Activated naive CD4-positive, alpha-beta T cell treated with anti-CD3 and anti-CD28 coated beads for 36 hours (primary cell): ENCODE measurements at regions of chr3 and their contacts with region 1.

Region 1: DNA sequence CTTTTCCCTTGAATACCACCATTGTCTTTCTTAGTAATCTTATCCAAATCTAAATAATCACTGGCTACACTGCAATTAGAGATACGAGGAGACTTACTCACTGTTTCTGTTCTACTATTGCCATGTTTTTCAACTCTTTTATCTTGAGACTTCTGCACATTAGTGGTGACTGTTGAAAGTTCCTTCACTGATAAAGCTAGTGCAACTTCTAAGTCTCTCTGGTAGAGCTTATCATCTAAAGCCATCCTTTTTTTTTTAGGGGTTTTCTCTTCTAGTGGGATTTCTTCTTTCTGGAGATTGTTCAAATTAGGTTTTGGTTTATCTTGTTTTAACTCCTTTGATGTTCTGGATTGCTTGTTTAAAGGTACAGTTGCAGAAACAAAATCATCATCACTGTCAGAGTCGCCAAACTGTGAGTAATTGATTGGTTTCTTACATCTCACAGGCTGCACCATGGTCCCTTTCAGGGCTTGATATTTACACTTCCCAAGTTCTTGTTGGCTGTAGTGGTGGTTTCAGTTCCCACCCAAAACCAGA is 37.7 kb downstream of the NCK1 start:
- DNase-seq: peak; percentile 19
- H3K4me3 Mint-ChIP-seq: peak overlapping the region; percentile 26
- H3K27ac Mint-ChIP-seq: peak overlapping the region; percentile 67
- H3K4me1 Mint-ChIP-seq: peaks cover 50% of the 10 kb centered on the region
- H3K27me3 Mint-ChIP-seq: no peaks in the 10 kb centered on the region

Region 2: GRCh38 chr3:136658946-136659682 is 240.6 kb before region 1 on chr3:
- CTCF ChIA-PET with region 1: no interaction called
- intact Hi-C with region 1: no loop called
- DNase-seq: no peak
- H3K4me3 Mint-ChIP-seq: no peak overlapping the region
- H3K27ac Mint-ChIP-seq: no peak overlapping the region
- H3K4me1 Mint-ChIP-seq: peaks cover 15% of the 10 kb centered on the region
- H3K27me3 Mint-ChIP-seq: no peaks in the 10 kb centered on the region

Region 3: DNA sequence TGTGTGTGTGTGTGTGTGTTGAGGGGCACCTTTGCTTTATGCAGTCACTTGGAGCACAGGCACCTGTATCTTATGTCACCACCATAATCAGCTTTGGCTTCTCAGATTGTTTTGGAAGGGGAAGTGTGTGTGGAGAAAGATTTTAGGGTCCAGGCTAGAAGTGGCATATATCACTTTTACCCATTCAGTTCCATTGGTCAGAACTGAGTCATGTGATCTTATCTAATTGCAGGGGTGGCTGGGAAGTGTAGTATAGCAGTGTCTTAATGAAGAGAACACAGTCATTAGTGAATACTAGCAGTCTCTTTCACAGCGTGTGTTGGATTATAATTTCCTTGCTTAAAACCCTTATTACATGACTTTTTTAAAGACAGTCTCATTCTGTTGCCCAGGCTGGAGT is 17.1 kb before region 1 on chr3:
- CTCF ChIA-PET with region 1: no interaction called
- intact Hi-C with region 1: loop called (anchors 2 kb)
- DNase-seq: no peak
- H3K4me3 Mint-ChIP-seq: no peak overlapping the region
- H3K27ac Mint-ChIP-seq: no peak overlapping the region
- H3K4me1 Mint-ChIP-seq: peaks cover 58% of the 10 kb centered on the region
- H3K27me3 Mint-ChIP-seq: no peaks in the 10 kb centered on the region

Region 4: DNA sequence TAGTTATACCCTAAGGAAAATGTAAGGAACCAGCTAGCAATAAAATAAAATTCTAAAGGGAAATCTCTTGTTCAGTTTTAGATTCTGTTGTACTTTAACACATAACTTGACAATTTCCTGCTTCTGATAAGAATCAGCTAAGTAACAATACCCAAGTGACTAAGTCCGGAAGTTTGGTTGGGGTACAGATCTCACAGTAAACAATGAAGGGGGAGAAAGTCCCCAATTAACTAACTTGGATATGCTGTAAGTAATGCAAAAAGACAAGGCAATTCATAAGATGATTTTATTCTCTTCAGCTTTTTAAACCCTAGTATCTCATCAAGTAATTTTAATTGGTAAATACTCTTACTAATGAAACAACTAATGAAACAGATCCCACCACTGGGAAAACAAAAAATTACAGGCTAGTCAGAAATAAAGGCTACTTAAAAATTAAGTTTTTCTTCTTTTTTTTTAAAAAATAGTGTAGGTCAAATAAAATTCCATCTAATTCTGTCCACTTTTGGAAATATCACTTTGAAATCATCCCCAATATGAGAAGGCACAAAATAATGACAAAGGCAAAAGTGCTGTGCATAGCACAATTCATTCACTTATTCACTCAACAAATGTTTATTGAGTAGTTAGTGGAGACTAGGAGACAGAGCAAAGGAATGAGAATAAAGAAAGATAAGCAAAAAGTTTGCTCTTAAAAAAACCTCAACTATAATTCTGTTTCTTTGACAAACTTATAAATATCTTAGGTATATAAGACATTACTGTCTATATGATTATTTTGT is 20.3 kb after region 1 on chr3:
- CTCF ChIA-PET with region 1: interaction called, 4 read pairs
- intact Hi-C with region 1: loop called (anchors 2 kb)
- DNase-seq: peak; percentile 21
- H3K4me3 Mint-ChIP-seq: no peak overlapping the region
- H3K27ac Mint-ChIP-seq: no peak overlapping the region
- H3K4me1 Mint-ChIP-seq: peaks cover 76% of the 10 kb centered on the region
- H3K27me3 Mint-ChIP-seq: no peaks in the 10 kb centered on the region

Region 5: DNA sequence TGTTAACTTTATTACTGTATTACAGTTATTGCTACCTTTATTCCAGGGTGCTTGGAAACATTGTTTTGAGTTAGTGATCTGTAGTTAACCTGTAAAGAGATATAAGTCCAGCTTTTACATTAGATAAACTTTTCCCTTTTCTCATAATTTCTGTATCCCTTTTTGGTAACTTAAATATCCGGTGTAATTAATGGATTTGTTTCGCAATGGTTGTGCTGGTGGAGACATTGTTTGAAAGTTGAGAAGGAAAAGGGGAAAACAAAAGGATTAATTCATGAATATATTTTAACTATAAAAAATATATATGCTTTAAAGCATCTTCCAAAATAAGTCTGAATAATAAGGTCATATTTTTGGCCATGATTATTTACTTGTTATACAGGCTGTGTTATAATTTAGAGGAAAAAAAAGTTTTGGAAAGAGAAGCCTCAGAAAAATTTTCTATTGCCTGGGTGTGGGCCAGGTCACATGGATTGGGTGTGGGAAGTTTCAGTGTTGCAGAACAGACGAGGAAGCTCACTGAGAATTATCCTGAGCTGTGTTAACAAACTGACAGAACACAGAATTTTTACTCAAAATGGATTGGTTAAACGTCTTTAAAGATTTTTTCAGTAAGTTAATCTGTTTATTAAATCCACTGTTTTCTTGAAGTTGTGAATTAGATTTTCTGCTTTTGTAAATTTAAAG is 30.4 kb after region 1 on chr3:
- CTCF ChIA-PET with region 1: interaction called, 4 read pairs
- intact Hi-C with region 1: loop called (anchors 5 kb)
- DNase-seq: no peak
- H3K4me3 Mint-ChIP-seq: no peak overlapping the region
- H3K27ac Mint-ChIP-seq: no peak overlapping the region
- H3K4me1 Mint-ChIP-seq: peaks cover 51% of the 10 kb centered on the region
- H3K27me3 Mint-ChIP-seq: no peaks in the 10 kb centered on the region